CD14-positive monocyte (primary cell): ENCODE measurements at regions of chr17 and their contacts with region 1.

Region 1: GRCh38 chr17:28552246-28552999 is at the start of gene UNC119:
- DNase-seq: peak; percentile 54 to 70 (median 62)
- H3K4me3 ChIP-seq: peak within 1 kb of the TSS; percentile 50 to 94 (median 83)
- H3K4me3 Mint-ChIP-seq: peak within 1 kb of the TSS; percentile 92 to 97
- H3K27ac ChIP-seq: peak within 1 kb of the TSS in 1 of 2 donors; percentile 73
- H3K27ac Mint-ChIP-seq: peak within 1 kb of the TSS; percentile 7 to 85 (median 72)
- H3K4me1 ChIP-seq: peaks cover 50 to 54% of the 10 kb centered on the region in 2 donors
- H3K4me1 Mint-ChIP-seq: peaks cover 50% of the 10 kb centered on the region
- H3K27me3 ChIP-seq: no peaks in the 10 kb centered on the region
- H3K27me3 Mint-ChIP-seq: peaks cover 0 to 2% (median 2%) of the 10 kb centered on the region in 3 donors
- CTCF ChIP-seq: no peak
- polyA plus RNA-seq, gene UNC119: 77.5 to 189 (median 80.2) TPM

Region 2: GRCh38 chr17:27494192-27495091 is 1058.0 kb before region 1 on chr17:
- intact Hi-C with region 1: no loop called
- DNase-seq: peak; percentile 76 to 83 (median 78)
- H3K4me3 ChIP-seq: peak overlapping the region in 1 of 3 experiments; percentile 34
- H3K4me3 Mint-ChIP-seq: peak overlapping the region in 1 of 2 donors; percentile 75
- H3K27ac ChIP-seq: peak overlapping the region; percentile 77 to 81
- H3K27ac Mint-ChIP-seq: peak overlapping the region; percentile 91 to 96 (median 94)
- H3K4me1 ChIP-seq: peaks cover 49 to 62% of the 10 kb centered on the region in 2 donors
- H3K4me1 Mint-ChIP-seq: peaks cover 73% of the 10 kb centered on the region
- H3K27me3 ChIP-seq: no peaks in the 10 kb centered on the region
- H3K27me3 Mint-ChIP-seq: no peaks in the 10 kb centered on the region
- CTCF ChIP-seq: no peak

Region 3: GRCh38 chr17:28443901-28444638 is 108.4 kb before region 1 on chr17:
- intact Hi-C with region 1: no loop called
- DNase-seq: no peak
- H3K4me3 ChIP-seq: no peak overlapping the region
- H3K4me3 Mint-ChIP-seq: no peak overlapping the region
- H3K27ac ChIP-seq: no peak overlapping the region
- H3K27ac Mint-ChIP-seq: no peak overlapping the region
- H3K4me1 ChIP-seq: peaks cover 0 to 5% of the 10 kb centered on the region in 2 donors
- H3K4me1 Mint-ChIP-seq: peaks cover 10% of the 10 kb centered on the region
- H3K27me3 ChIP-seq: no peaks in the 10 kb centered on the region
- H3K27me3 Mint-ChIP-seq: peaks cover 0 to 5% (median 0%) of the 10 kb centered on the region in 3 donors
- CTCF ChIP-seq: no peak

Region 4: DNA sequence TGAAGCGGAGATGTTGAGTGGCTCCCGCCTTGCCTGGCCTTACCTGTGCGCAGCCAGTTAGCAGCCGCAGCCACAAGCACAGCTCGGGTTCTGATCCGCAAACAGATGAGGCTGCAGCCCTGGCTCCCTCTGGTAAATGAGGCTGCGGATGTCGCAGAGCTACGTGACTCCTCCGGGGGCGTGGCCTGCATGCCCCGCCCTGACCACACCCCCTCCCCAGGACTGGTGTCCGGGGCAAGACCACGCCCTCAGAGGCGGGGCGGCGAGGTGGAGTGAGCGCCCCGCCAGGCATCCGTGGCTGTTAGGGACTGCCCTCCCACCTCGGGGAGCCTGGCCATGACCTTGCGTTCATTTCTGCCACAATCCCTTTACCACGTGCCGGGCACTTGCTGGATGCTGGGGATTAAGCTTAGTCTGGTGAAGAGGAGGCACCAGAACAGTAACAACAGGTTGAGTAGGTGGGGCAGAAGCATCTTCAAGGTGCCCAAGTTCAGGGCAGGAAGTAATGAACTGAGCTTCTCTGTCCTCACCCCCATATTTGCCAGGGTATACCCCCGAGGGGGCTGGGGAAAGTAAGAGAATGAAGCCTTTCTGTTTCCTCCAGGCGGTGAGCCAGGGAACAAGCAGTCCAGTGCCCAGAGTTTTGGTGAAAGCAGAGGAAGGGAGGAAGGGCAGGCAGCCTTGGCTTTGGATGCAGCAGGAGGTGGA is 24.5 kb after region 1 on chr17 and contains the start of gene ALDOC:
- intact Hi-C with region 1: loop called in 1 of 2 experiments (anchors 2 kb)
- DNase-seq: peak; percentile 93 to 97 (median 96)
- H3K4me3 ChIP-seq: peak within 1 kb of the TSS in 1 of 3 experiments; percentile 64
- H3K4me3 Mint-ChIP-seq: peak within 1 kb of the TSS; percentile 68 to 85
- H3K27ac ChIP-seq: peak within 1 kb of the TSS in 1 of 2 donors; percentile 35
- H3K27ac Mint-ChIP-seq: peak within 1 kb of the TSS; percentile 33 to 85 (median 75)
- H3K4me1 ChIP-seq: peaks cover 8 to 9% of the 10 kb centered on the region in 2 donors
- H3K4me1 Mint-ChIP-seq: peaks cover 18% of the 10 kb centered on the region
- H3K27me3 ChIP-seq: no peaks in the 10 kb centered on the region
- H3K27me3 Mint-ChIP-seq: peaks cover 2 to 7% (median 3%) of the 10 kb centered on the region in 3 donors
- CTCF ChIP-seq: no peak
- polyA plus RNA-seq, gene ALDOC: 7.1 to 10.6 (median 9.8) TPM